ENCODE measurements at regions of chr3 and their contacts with region 1.

Region 1: DNA sequence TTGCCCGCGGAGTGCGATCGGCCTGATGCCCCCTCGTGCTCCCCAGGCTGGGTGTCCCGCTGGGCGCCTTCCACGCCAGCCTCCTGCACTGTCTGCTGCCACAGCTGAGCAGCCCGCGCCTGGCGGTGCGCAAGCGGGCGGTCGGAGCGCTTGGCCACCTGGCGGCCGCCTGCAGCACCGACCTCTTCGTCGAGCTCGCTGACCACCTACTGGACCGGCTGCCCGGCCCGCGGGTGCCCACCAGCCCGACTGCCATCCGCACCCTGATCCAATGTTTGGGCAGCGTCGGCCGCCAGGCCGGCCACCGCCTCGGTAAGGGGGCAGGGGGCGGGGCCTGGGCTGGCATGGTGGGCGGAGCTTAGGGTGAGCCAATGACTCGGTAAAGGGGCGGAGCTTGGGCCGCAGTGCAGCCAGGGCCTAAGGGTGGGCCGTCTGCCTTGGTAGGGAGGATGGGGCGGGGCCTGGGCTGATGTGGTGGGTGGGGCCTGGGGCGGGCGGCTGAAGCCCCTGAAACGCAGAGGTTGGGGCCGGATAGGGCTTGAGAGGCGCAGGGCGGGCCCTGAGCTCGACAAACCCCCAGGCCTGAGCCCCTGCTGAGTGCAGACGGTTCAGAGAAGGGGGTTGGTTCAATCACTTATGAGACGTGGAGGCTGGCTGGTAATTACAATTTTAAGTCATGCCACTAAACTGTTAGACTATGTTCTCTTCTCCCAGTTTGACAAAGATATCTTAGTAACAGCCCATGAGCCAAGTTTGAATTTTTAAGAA is 13.7 kb downstream of the CAND2 start:
- DNase-seq: peak; percentile 90 to 96 (median 95)
- H3K4me3 ChIP-seq: peak overlapping the region; percentile 1 to 81 (median 61)
- H3K27ac ChIP-seq: no peak overlapping the region
- H3K4me1 ChIP-seq: peaks cover 0 to 13% (median 12%) of the 10 kb centered on the region in 4 experiments
- H3K27me3 ChIP-seq: peaks cover 0 to 2% (median 0%) of the 10 kb centered on the region in 5 experiments

Region 2: DNA sequence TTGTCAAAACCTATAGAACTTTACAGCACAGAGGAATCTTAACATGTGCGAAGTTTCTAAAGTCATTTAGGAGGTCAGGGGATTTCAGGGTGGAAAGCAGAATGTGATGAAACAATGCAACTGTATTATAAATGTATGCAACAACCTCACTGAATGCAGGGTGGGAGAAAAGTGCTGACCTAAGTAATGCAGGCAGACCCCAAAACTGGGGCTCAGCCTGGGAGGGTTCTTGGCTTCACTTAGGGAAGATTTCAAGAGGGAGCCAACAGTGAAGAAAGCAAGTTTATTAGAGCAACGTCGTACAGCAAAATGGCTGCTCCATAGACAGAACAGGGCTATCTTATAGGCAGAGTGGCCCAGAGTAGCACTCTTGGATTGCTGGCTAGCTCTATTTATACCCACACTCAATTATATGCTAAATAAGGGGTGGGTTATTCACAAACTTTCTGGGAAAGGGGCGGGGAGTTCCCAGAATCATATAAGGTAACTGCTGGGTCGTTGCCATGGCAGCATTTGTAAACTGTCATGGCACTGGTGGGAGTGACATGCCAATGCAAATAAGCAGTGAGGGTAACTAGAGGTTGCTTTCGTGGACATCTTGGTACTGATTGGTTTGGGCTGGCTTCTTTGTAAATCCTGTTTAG is 27.9 kb before region 1 on chr3:
- CTCF ChIA-PET with region 1: interaction called, 30 read pairs
- POLR2A ChIA-PET with region 1: interaction called, 3 read pairs
- DNase-seq: peak in 1 of 3 donors; percentile 21
- H3K4me3 ChIP-seq: no peak overlapping the region
- H3K27ac ChIP-seq: no peak overlapping the region
- H3K4me1 ChIP-seq: no peaks in the 10 kb centered on the region
- H3K27me3 ChIP-seq: peaks cover 0 to 3% (median 0%) of the 10 kb centered on the region in 5 experiments

Region 3: DNA sequence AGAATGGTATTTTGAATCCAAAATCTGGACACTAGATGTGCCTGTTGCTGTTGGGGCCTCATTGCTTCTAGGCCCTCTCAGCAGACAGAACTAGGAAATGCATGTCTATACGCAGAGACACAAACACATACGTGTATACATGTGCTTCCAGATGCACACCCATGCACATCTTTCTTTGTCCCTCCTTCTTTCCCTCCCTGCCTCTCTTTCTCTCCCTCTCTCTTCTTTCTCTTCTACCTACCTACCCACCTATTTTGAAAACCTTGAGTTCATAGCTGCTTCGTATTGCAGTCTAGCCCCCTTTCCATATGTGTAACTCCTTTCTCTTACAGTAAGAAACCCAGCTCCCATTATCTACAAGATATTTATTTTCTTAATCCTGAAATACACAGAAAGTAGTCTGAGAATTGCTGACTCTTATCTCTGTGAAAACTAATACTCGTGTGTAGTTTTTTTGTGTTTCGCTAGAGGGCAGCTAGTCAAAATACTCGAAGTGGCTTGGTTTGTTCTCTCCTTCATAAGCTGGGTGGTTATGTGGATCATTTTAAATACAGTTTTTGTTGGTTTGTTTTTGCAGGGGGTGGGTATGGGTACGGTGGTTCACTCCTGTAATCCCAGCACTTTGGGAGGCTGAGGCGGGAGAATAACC is 12.7 kb after region 1 on chr3:
- CTCF ChIA-PET with region 1: interaction called, 11 read pairs
- POLR2A ChIA-PET with region 1: interaction called, 3 read pairs
- DNase-seq: peak in 2 of 3 donors; percentile 43 to 57
- H3K4me3 ChIP-seq: no peak overlapping the region
- H3K27ac ChIP-seq: no peak overlapping the region
- H3K4me1 ChIP-seq: peaks cover 0 to under 1% (median 0%) of the 10 kb centered on the region in 4 experiments
- H3K27me3 ChIP-seq: no peaks in the 10 kb centered on the region